ENCODE measurements at regions of chr6 and their contacts with region 1.

Region 1: DNA sequence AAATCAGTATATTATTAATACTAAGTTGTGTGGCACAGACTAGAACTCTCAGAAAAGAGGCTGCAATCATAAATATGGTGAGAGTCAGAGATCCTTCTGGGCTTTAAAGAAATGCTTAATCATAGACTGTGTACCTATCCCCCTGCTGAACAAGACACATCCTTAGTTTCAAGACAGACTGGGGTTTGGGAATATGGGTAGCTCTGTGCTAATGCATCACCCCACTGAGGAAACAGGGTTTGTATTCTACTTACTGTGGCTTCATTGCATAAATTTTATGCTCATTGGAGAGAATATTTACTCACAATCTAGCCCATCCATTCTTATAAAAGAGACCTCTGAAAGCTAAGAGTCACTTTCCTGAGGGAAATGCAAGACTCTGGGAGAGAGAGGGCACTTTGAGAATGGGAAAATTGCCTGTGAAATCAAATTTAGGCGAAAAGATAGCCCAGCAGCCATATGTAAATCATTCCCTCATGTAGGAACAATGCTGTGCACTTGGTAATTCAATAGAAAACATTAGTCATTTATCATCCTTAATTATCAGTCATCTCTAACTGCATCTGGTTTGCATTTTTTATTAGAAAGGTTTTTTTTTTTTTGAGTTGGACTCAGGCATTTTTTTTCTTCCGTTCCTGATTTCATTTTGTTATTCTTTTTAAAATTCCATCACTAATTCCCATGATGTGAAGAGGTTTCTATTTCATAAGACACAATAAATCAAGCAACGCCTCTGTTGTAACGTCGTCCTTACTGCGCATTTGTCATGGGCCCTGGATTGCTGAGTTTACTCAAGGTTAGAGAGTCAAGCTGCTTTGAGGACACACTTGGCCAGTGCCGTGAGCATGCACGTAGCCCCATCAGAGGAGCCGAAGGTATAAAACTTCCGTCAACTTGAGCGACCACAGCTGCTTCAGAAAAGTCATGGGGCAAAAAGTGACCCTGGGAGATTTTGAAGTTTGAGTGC is 91.8 kb downstream of the TRMT11 start:
- DNase-seq: no peak
- H3K4me3 ChIP-seq: no peak overlapping the region
- H3K4me3 Mint-ChIP-seq: no peak overlapping the region
- H3K27ac Mint-ChIP-seq: no peak overlapping the region
- H3K4me1 ChIP-seq: peaks cover 26% of the 10 kb centered on the region
- H3K4me1 Mint-ChIP-seq: peaks cover 6% of the 10 kb centered on the region
- H3K27me3 ChIP-seq: no peaks in the 10 kb centered on the region
- H3K27me3 Mint-ChIP-seq: no peaks in the 10 kb centered on the region
- CTCF ChIP-seq: no peak

Region 2: DNA sequence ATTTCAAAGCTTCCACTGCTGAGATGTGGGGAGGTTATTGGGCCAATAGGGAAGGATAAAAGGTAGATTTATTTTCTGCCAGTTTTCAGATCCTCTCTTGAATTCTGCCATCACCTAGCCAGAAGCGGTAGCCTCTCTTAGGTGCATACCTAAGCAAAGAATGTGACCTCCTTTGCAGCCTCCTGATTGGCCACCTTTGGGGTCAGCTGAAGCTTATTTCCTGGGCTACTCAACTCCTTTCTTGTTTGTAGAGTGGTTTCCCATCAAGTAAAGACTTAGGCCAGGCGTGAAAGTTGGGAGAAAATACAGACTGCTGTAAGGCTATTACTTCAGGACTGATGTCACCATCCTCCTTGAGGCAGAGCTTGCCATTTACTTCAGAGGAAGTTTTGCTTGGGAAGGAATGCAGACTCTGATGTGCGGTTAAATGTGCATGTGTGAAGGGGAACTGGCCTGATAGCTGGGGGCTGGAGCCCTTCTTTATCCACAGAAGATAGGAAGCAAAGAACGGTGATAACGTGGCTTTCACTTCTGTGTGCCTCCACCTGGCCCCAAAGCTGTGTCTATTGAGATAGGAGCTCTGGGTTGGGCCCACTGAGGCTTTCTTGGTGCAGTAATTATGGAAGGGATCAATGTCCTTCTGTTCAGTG is 21.6 kb before region 1 on chr6:
- CTCF ChIA-PET with region 1: no interaction called
- POLR2A ChIA-PET with region 1: no interaction called
- intact Hi-C with region 1: loop called (anchors 2 kb)
- DNase-seq: no peak
- H3K4me3 ChIP-seq: no peak overlapping the region
- H3K4me3 Mint-ChIP-seq: no peak overlapping the region
- H3K27ac Mint-ChIP-seq: no peak overlapping the region
- H3K4me1 ChIP-seq: peaks cover 30% of the 10 kb centered on the region
- H3K4me1 Mint-ChIP-seq: peaks cover 8% of the 10 kb centered on the region
- H3K27me3 ChIP-seq: no peaks in the 10 kb centered on the region
- H3K27me3 Mint-ChIP-seq: no peaks in the 10 kb centered on the region
- CTCF ChIP-seq: no peak

Region 3: GRCh38 chr6:126091507-126091906 is 13.4 kb after region 1 on chr6:
- CTCF ChIA-PET with region 1: no interaction called
- POLR2A ChIA-PET with region 1: no interaction called
- intact Hi-C with region 1: loop called (anchors 1 kb)
- DNase-seq: peak in 1 of 2 experiments; percentile 4
- H3K4me3 ChIP-seq: no peak overlapping the region
- H3K4me3 Mint-ChIP-seq: no peak overlapping the region
- H3K27ac Mint-ChIP-seq: peak overlapping the region; percentile 51
- H3K4me1 ChIP-seq: no peaks in the 10 kb centered on the region; the same call in 1 of the 2 replicates
- H3K4me1 Mint-ChIP-seq: peaks cover 18% of the 10 kb centered on the region
- H3K27me3 ChIP-seq: no peaks in the 10 kb centered on the region
- H3K27me3 Mint-ChIP-seq: no peaks in the 10 kb centered on the region
- CTCF ChIP-seq: no peak

Region 4: GRCh38 chr6:126118058-126118755 is 40.1 kb after region 1 on chr6:
- CTCF ChIA-PET with region 1: no interaction called
- POLR2A ChIA-PET with region 1: no interaction called
- intact Hi-C with region 1: no loop called
- DNase-seq: no peak
- H3K4me3 ChIP-seq: no peak overlapping the region
- H3K4me3 Mint-ChIP-seq: no peak overlapping the region
- H3K27ac Mint-ChIP-seq: no peak overlapping the region
- H3K4me1 ChIP-seq: no peaks in the 10 kb centered on the region
- H3K4me1 Mint-ChIP-seq: no peaks in the 10 kb centered on the region
- H3K27me3 ChIP-seq: no peaks in the 10 kb centered on the region
- H3K27me3 Mint-ChIP-seq: no peaks in the 10 kb centered on the region
- CTCF ChIP-seq: no peak